Endothelial cell of umbilical vein (primary cell): ENCODE measurements at regions of chr9 and their contacts with region 1.

Region 1: GRCh38 chr9:36328798-36329411 is 70.7 kb upstream of the GNE start:
- DNase-seq: peak; percentile 78
- H3K4me3 ChIP-seq: no peak overlapping the region
- H3K27ac ChIP-seq: no peak overlapping the region
- H3K4me1 ChIP-seq: no peaks in the 10 kb centered on the region
- H3K27me3 ChIP-seq: no peaks in the 10 kb centered on the region
- CTCF ChIP-seq: peak; percentile 46 to 55
- POLR2A ChIP-seq: no peak

Region 2: DNA sequence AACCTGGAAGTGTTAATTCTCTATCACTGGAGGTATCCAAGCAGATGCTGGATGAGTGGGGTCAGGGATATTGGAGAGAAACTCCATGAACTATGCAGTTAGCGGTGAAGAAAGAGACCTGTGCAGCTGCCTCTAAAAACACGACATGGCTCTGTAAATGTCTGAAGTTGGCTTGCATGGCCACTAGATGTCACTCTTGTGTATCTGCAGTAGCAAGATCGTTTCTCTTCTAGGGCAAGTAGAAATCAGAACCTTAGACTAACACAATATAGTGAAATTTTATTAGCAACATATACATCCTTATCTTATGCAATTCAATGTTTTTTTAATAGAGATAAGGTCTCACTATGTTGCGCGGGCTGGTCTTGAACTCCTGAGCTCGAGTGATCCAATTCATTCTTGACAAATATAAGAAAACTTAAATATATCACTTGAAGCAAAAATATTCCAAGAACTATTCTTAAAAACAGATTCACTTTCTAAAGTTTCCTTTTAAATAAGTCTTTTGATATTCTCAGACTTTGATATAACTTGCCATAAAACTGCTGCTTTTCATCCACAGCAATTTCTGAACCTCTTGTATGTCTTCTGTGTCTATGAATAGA is 373.9 kb before region 1 on chr9:
- CTCF ChIA-PET with region 1: interaction called, 12 read pairs
- POLR2A ChIA-PET with region 1: no interaction called
- dilution Hi-C with region 1: no loop called
- intact Hi-C with region 1: loop called (anchors 5 kb)
- DNase-seq: peak; percentile 79
- H3K4me3 ChIP-seq: no peak overlapping the region
- H3K27ac ChIP-seq: no peak overlapping the region
- H3K4me1 ChIP-seq: peaks cover 19% of the 10 kb centered on the region
- H3K27me3 ChIP-seq: no peaks in the 10 kb centered on the region
- CTCF ChIP-seq: peak; percentile 71 to 75
- POLR2A ChIP-seq: no peak

Region 3: DNA sequence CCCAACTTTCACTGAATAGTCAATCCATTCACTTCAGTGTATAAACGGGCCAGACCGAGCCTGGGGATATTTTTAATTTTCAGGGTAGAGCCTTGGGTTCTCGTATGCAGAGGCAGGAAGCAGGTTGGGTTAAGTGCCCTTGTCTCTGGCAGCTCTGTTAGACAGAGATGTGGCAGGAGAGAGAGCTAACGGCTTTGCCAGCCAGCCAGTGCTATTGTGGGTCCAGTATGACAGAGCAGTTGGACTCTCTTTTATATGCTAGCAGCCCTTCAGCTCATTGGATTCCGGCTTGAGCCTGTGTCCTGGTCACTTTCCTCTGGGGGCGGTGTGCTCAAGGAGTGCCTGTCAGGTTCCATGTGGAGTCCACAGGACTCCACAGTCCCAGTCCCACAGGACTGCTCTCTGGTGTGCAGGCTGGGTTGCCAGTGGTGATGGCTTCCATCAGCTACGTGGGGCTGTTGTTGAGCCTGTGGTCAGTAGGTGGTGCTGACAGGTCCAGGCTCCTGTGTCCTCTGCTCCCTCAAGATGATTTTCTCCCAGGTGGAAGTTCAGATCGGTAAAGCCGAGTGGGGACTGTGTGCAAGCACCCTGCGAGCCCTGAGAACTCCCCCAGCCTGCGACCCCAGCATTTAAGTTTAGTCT is 123.9 kb before region 1 on chr9:
- CTCF ChIA-PET with region 1: interaction called, 13 read pairs
- POLR2A ChIA-PET with region 1: no interaction called
- dilution Hi-C with region 1: no loop called
- intact Hi-C with region 1: no loop called
- DNase-seq: peak; percentile 15
- H3K4me3 ChIP-seq: no peak overlapping the region
- H3K27ac ChIP-seq: no peak overlapping the region
- H3K4me1 ChIP-seq: peaks cover 31% of the 10 kb centered on the region
- H3K27me3 ChIP-seq: no peaks in the 10 kb centered on the region
- CTCF ChIP-seq: no peak
- POLR2A ChIP-seq: no peak

Region 4: DNA sequence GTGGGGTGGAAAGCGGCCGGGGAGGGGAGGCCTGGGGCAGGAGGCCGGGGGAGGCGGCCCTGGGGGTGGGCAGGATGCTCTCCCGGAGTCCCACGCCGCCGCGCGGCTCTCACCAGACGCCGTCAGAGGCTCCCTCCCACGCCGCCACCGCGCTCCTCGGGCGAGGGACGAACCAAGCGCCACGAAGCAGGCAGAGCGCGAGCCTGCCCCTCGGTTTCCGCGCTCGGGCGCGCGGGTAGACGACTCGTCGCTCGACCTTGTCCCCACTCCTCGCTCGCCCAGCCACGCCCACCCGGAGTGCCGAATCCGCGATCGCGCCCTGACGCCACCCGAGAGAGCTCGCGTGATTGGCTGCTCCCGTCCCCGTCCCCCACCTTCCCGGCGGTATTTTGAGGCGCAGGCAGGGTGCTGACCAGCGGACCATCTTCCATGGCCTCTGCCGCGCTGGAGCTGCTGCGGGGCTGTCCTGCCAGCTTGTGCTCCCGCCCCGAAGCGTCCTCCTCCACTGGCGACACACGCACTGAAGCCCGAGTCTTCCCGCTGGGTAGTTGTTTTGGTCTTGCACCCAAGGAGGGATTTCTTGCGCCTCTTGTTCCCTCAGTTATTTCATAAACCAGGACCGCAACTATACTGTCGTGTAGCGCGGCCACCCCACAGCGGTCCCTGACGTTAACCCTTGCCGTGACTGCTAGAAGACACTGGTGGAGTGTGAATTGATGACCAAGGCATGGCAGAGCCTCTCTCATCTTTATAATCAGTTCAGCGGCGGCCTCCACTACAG is 70.5 kb before region 1 on chr9 and contains the start of gene GNE:
- CTCF ChIA-PET with region 1: interaction called, 184 read pairs
- POLR2A ChIA-PET with region 1: no interaction called
- dilution Hi-C with region 1: no loop called
- intact Hi-C with region 1: no loop called
- DNase-seq: peak; percentile 95
- H3K4me3 ChIP-seq: peak within 1 kb of the TSS; percentile 65 to 84 (median 66)
- H3K27ac ChIP-seq: peak within 1 kb of the TSS; percentile 44
- H3K4me1 ChIP-seq: peaks cover 4% of the 10 kb centered on the region
- H3K27me3 ChIP-seq: no peaks in the 10 kb centered on the region
- CTCF ChIP-seq: no peak
- POLR2A ChIP-seq: peak; percentile 83
- total RNA-seq, gene GNE: 11.4 and 12.3 TPM in 2 replicates

Region 5: DNA sequence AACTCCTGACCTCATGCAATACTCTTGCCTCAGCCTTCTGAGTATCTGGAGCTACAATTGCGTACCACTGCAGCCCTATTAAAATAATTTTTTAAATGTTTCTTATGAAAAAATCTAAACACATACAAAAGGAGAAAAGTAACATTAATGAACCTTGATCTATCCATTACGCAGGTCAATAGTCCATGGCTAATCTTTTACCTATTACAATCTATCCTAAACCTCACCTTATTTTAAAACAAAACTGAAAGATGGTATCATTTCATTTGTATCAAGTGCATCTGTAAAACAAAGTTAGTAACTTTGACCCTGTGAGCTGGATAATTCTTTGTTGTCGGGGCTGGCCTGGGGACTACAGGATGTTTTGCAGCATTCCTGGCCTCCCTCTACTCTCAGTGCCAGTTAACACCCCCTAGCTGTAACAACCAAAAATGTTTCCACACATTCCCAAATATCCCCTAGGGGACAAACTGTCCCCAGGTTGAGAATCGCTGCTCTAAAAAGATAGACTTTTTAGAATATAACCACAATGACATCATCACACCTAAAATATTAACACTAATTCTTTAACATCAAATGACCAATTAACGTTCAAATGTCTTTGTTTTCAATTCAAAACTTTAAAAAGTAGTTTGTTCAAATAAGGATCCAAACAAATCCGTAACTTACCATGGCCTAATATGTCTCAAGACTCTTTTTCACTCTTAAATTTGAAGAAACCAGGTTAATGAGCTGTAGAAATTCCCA is 16.4 kb after region 1 on chr9:
- CTCF ChIA-PET with region 1: interaction called, 23 read pairs
- POLR2A ChIA-PET with region 1: no interaction called
- dilution Hi-C with region 1: no loop called
- intact Hi-C with region 1: no loop called
- DNase-seq: peak; percentile 20
- H3K4me3 ChIP-seq: no peak overlapping the region
- H3K27ac ChIP-seq: no peak overlapping the region
- H3K4me1 ChIP-seq: no peaks in the 10 kb centered on the region
- H3K27me3 ChIP-seq: no peaks in the 10 kb centered on the region
- CTCF ChIP-seq: no peak
- POLR2A ChIP-seq: no peak

Region 6: DNA sequence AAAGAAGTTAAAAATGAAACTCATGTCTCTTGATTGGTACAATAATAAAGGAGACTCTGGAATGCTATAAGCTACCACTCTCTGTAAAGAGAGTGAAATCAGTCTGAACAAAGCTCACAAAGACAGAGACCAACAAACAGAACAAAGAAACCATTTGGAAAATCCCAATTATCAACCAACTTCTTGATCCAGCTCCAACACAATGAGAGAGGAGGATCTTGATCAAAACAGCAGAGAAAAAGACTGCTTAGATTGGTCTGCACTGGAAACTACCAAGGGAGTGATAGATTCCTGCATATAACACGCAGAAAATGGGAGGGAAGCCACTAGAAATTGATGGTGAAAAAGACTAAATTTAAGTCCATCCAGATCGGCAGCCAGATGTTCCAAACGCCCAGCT is 94.3 kb after region 1 on chr9:
- CTCF ChIA-PET with region 1: no interaction called
- POLR2A ChIA-PET with region 1: no interaction called
- dilution Hi-C with region 1: no loop called
- intact Hi-C with region 1: no loop called
- DNase-seq: no peak
- H3K4me3 ChIP-seq: no peak overlapping the region
- H3K27ac ChIP-seq: no peak overlapping the region
- H3K4me1 ChIP-seq: peaks cover 19% of the 10 kb centered on the region
- H3K27me3 ChIP-seq: no peaks in the 10 kb centered on the region
- CTCF ChIP-seq: no peak
- POLR2A ChIP-seq: no peak

Region 7: DNA sequence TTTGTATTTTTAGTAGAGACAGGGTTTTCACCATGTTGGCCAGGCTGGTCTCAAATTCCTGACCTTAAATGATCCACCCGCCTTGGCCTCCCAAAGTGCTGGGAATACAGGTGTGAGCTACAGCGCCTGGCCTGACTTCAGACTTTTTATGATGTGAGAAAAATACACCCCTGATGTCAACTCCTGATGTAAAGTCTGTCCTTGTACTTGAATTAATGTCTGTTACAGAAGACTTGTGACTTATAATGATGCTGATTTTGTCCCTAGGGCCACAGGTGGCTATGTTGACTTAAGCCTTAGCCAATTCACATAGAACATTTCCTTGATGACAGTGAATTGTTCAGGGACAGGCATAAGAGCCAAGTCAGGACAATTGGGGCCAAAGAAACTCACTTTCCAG is 201.3 kb after region 1 on chr9:
- CTCF ChIA-PET with region 1: no interaction called
- POLR2A ChIA-PET with region 1: no interaction called
- dilution Hi-C with region 1: no loop called
- intact Hi-C with region 1: no loop called
- DNase-seq: no peak
- H3K4me3 ChIP-seq: no peak overlapping the region
- H3K27ac ChIP-seq: no peak overlapping the region
- H3K4me1 ChIP-seq: no peaks in the 10 kb centered on the region
- H3K27me3 ChIP-seq: peaks cover 1 to 6% of the 10 kb centered on the region in 2 experiments
- CTCF ChIP-seq: no peak
- POLR2A ChIP-seq: no peak